Activated CD8-positive, alpha-beta T cell treated with anti-CD3 and anti-CD28 coated beads, Interleukin-2, amount 10 ng/mL, durations not matched to agents 7 days and 5 days (primary cell): ENCODE measurements at regions of chr7 and their contacts with region 1.

Region 1: GRCh38 chr7:143008007-143008901 is 18.7 kb downstream of the OR9A2 start:
- DNase-seq: peak; percentile 86
- ATAC-seq: peak; percentile 93
- H3K4me3 Mint-ChIP-seq: no peak overlapping the region
- H3K27ac Mint-ChIP-seq: no peak overlapping the region
- H3K4me1 Mint-ChIP-seq: peaks cover 2% of the 10 kb centered on the region
- H3K27me3 Mint-ChIP-seq: peaks cover 22% of the 10 kb centered on the region

Region 2: GRCh38 chr7:142853739-142854371 is 154.4 kb before region 1 on chr7:
- CTCF ChIA-PET with region 1: interaction called, 32 read pairs
- POLR2A ChIA-PET with region 1: no interaction called
- DNase-seq: peak; percentile 77
- ATAC-seq: peak; percentile 87
- H3K4me3 Mint-ChIP-seq: peak overlapping the region; percentile 92
- H3K27ac Mint-ChIP-seq: peak overlapping the region; percentile 47
- H3K4me1 Mint-ChIP-seq: peaks cover 3% of the 10 kb centered on the region
- H3K27me3 Mint-ChIP-seq: peaks cover 22% of the 10 kb centered on the region

Region 3: GRCh38 chr7:142873281-142873787 is 134.9 kb before region 1 on chr7:
- CTCF ChIA-PET with region 1: interaction called, 22 read pairs
- POLR2A ChIA-PET with region 1: no interaction called
- DNase-seq: peak; percentile 45
- ATAC-seq: peak; percentile 43
- H3K4me3 Mint-ChIP-seq: no peak overlapping the region
- H3K27ac Mint-ChIP-seq: no peak overlapping the region
- H3K4me1 Mint-ChIP-seq: no peaks in the 10 kb centered on the region
- H3K27me3 Mint-ChIP-seq: no peaks in the 10 kb centered on the region

Region 4: DNA sequence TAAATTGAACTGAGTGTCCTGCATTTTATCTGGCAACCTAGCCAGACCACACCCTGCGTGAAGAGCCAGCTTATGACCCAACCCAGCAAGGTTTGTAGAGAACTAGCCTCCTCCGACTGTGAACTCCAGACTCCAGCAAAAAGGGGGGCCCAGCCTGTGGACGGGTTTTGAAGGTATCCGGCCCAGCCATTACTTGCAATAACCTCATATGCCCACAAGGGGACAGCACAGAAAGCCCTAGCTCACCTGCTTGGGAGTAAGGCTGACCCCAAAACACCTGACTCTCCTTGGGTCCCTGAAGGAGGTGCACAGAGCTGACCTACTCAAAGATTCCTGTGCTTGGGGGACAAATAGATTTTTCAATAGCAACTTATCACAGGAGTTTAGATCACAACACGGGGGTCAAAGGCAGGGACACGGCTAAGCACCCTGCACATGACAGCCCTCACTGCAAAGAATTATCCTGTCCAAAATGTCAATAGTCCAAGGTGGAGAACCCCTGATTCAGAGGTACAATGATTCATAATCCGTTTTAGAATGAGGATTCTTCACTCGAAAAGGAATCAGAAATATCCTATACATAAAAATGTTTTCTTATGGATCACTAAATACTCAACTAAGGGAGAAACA is 127.3 kb before region 1 on chr7:
- CTCF ChIA-PET with region 1: interaction called, 62 read pairs
- POLR2A ChIA-PET with region 1: no interaction called
- DNase-seq: peak; percentile 66
- ATAC-seq: peak; percentile 78
- H3K4me3 Mint-ChIP-seq: no peak overlapping the region
- H3K27ac Mint-ChIP-seq: no peak overlapping the region
- H3K4me1 Mint-ChIP-seq: no peaks in the 10 kb centered on the region
- H3K27me3 Mint-ChIP-seq: peaks cover 12% of the 10 kb centered on the region

Region 5: GRCh38 chr7:142992464-142992863 is 15.8 kb before region 1 on chr7:
- CTCF ChIA-PET with region 1: interaction called, 12 read pairs
- POLR2A ChIA-PET with region 1: no interaction called
- DNase-seq: no peak
- ATAC-seq: no peak
- H3K4me3 Mint-ChIP-seq: no peak overlapping the region
- H3K27ac Mint-ChIP-seq: no peak overlapping the region
- H3K4me1 Mint-ChIP-seq: no peaks in the 10 kb centered on the region
- H3K27me3 Mint-ChIP-seq: peaks cover 13% of the 10 kb centered on the region

Region 6: GRCh38 chr7:143214789-143215679 is 206.8 kb after region 1 on chr7:
- CTCF ChIA-PET with region 1: interaction called, 333 read pairs
- POLR2A ChIA-PET with region 1: no interaction called
- DNase-seq: peak; percentile 79
- ATAC-seq: peak; percentile 85
- H3K4me3 Mint-ChIP-seq: no peak overlapping the region
- H3K27ac Mint-ChIP-seq: no peak overlapping the region
- H3K4me1 Mint-ChIP-seq: no peaks in the 10 kb centered on the region
- H3K27me3 Mint-ChIP-seq: peaks cover 6% of the 10 kb centered on the region

Region 7: GRCh38 chr7:143362131-143363015 is 354.1 kb after region 1 on chr7 and contains the start of gene FAM131B:
- CTCF ChIA-PET with region 1: no interaction called
- POLR2A ChIA-PET with region 1: no interaction called
- DNase-seq: peak; percentile 48
- ATAC-seq: peak; percentile 82
- H3K4me3 Mint-ChIP-seq: peak within 1 kb of the TSS; percentile 80
- H3K27ac Mint-ChIP-seq: peak within 1 kb of the TSS; percentile 57
- H3K4me1 Mint-ChIP-seq: peaks cover 6% of the 10 kb centered on the region
- H3K27me3 Mint-ChIP-seq: peaks cover 52% of the 10 kb centered on the region
- total RNA-seq, gene FAM131B: 2.2 to 2.4 TPM